ENCODE measurements at regions of chr7 and their contacts with region 1.

Region 1: DNA sequence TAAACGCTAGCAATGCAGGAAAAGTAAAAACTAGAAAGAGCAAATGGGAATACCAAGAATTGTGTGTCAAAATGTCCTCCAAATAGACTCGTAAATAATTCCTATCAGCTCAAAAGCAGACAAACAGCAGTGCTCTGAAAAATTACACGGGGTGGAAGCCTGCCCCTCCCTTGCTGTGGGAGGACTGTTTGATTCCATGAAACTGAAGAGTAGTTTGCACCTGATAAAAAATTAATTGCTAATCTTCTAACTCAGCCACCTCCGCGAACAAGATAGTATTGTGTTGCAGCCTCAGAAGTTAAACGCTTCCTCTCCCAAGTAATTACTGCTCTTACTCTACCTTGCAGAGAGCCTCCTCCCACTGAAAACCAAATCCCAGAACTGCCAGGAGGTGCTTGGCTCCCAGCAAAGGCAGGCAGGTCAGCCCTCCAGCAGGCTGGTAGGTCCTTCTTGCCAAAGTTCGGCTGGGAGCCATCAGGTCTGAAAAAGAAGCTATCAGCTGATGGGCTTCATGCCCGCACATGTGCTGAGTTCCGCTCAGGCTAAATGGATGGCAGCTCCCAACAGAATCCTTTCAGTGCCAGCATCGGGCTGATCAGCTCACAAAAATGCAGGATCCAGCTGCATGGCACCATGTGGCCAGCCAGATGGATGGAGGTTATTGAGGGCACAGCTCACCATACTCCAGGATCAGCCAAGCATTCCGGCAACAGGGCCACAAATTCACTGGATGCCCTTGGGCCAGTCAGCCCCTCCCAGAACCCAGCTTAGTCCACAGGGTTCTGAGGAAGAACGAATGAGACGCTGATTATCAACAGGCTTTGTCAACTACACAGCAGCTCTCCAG is 37.1 kb downstream of the MAD1L1 start:
- DNase-seq: no peak
- ATAC-seq: no peak
- H3K4me3 Mint-ChIP-seq: no peak overlapping the region
- H3K27ac Mint-ChIP-seq: no peak overlapping the region
- H3K4me1 Mint-ChIP-seq: peaks cover 4% of the 10 kb centered on the region
- H3K27me3 Mint-ChIP-seq: no peaks in the 10 kb centered on the region
- CTCF ChIP-seq: no peak

Region 2: GRCh38 chr7:2063575-2064257 is 131.9 kb before region 1 on chr7:
- CTCF ChIA-PET with region 1: no interaction called
- POLR2A ChIA-PET with region 1: no interaction called
- intact Hi-C with region 1: no loop called
- DNase-seq: no peak
- ATAC-seq: no peak
- H3K4me3 Mint-ChIP-seq: no peak overlapping the region
- H3K27ac Mint-ChIP-seq: no peak overlapping the region
- H3K4me1 Mint-ChIP-seq: peaks cover 28% of the 10 kb centered on the region
- H3K27me3 Mint-ChIP-seq: no peaks in the 10 kb centered on the region
- CTCF ChIP-seq: no peak

Region 3: GRCh38 chr7:2182461-2182860 is 13.2 kb before region 1 on chr7:
- CTCF ChIA-PET with region 1: interaction called, 10 read pairs
- POLR2A ChIA-PET with region 1: no interaction called
- intact Hi-C with region 1: no loop called
- DNase-seq: no peak
- ATAC-seq: no peak
- H3K4me3 Mint-ChIP-seq: no peak overlapping the region
- H3K27ac Mint-ChIP-seq: no peak overlapping the region
- H3K4me1 Mint-ChIP-seq: no peaks in the 10 kb centered on the region
- H3K27me3 Mint-ChIP-seq: no peaks in the 10 kb centered on the region
- CTCF ChIP-seq: no peak